ENCODE measurements at regions of chr2 and their contacts with region 1.

Region 1: GRCh38 chr2:48946449-48947048 is 191.0 kb upstream of the LHCGR start:
- DNase-seq: no peak
- ATAC-seq: peak; percentile 70 to 88
- H3K4me3 ChIP-seq: no peak overlapping the region
- H3K27ac ChIP-seq: no peak overlapping the region
- H3K4me1 ChIP-seq: peaks cover 10% of the 10 kb centered on the region
- H3K27me3 ChIP-seq: no peaks in the 10 kb centered on the region

Region 2: GRCh38 chr2:49044350-49045079 is 98.0 kb after region 1 on chr2:
- intact Hi-C with region 1: loop called in 1 of 4 experiments (anchors 10 kb)
- DNase-seq: no peak
- ATAC-seq: peak; percentile 61 to 63
- H3K4me3 ChIP-seq: no peak overlapping the region
- H3K27ac ChIP-seq: no peak overlapping the region
- H3K4me1 ChIP-seq: no peaks in the 10 kb centered on the region
- H3K27me3 ChIP-seq: no peaks in the 10 kb centered on the region

Region 3: DNA sequence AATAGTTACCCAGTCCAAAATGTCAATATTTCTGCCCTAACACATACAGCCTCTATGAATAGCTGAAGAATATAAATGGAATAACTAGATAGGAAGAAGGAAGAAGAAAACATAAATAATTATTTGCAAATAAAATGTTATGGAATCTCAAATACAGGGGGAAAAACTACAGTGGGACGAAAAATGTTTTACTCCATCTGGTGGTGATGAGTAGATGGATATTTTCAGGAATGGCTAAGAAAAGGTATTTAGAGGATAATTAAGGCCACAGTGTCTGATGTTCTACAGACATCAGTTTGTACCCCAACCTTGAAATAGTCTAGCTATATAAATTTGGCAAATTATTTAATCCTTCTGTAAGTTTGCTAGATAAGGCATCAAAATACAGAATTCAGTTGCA is 385.9 kb after region 1 on chr2:
- intact Hi-C with region 1: loop called in 1 of 4 experiments (anchors 10 kb)
- DNase-seq: no peak
- ATAC-seq: no peak
- H3K4me3 ChIP-seq: no peak overlapping the region
- H3K27ac ChIP-seq: no peak overlapping the region
- H3K4me1 ChIP-seq: no peaks in the 10 kb centered on the region
- H3K27me3 ChIP-seq: no peaks in the 10 kb centered on the region

Region 4: DNA sequence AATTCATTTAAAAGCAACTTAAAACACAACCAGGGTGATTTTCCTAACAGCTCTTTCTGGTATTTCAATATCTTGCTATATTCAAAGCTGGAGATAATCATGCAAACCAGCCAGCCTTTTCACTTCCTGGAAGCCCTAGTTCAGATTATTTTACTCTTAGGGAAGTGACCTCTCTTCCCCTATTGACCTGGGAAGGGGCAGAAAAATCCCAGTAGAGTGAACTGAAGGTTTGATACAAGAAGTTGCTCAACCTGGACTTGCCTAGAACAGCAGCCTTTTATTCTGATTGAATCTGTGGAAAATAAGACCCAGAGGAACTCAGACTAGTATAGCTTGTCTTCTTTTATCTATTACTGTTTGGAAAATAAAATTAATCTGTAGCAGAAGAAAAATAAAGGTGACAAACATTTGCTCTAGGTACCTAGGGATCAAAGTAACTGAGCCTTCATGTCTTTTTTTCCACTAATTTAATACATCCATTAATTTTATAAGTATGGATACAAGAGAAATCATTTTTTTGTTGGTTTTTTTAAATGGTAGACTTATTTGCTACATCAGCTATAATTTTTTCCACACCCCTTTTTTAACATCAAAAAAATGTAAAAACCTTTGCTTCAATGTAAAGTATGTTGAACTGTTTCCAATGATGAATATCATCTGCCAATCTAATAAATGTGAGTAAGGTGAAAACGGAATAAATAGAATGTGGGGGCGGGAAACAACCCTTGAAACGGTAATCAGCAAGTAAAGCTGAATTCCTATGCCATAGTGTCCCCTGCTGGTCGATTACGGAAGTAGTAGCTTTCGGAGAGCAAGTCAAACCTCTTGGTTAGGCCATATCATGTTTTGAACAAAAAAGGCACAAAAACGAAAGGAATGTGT is 1455.5 kb after region 1 on chr2:
- intact Hi-C with region 1: loop called in 1 of 4 experiments (anchors 10 kb)
- DNase-seq: peak in 1 of 3 donors; percentile 16
- ATAC-seq: peak; percentile 41 to 70
- H3K4me3 ChIP-seq: no peak overlapping the region
- H3K27ac ChIP-seq: no peak overlapping the region
- H3K4me1 ChIP-seq: no peaks in the 10 kb centered on the region
- H3K27me3 ChIP-seq: no peaks in the 10 kb centered on the region

Measured in right cardiac atrium (tissue), 5 donors.